ENCODE measurements at regions of chr15 and their contacts with region 1.

Region 1: GRCh38 chr15:35606450-35606779 is 60.5 kb upstream of the DPH6 start:
- DNase-seq: no peak
- ATAC-seq: peak in 1 of 2 donors; percentile 54

Region 2: GRCh38 chr15:35301088-35301487 is 305.3 kb before region 1 on chr15:
- intact Hi-C with region 1: loop called in 1 of 2 experiments (anchors 5 kb)
- DNase-seq: no peak
- ATAC-seq: no peak

Region 3: GRCh38 chr15:35751413-35752133 is 145.2 kb after region 1 on chr15:
- intact Hi-C with region 1: no loop called
- DNase-seq: peak; percentile 79
- ATAC-seq: peak; percentile 80 to 86